ENCODE measurements at regions of chr3 and their contacts with region 1.

Region 1: GRCh38 chr3:146065573-146066006 is 95.4 kb downstream of the PLOD2 start:
- DNase-seq: no peak
- H3K4me3 Mint-ChIP-seq: no peak overlapping the region
- H3K27ac Mint-ChIP-seq: no peak overlapping the region
- H3K4me1 Mint-ChIP-seq: no peaks in the 10 kb centered on the region
- H3K27me3 Mint-ChIP-seq: no peaks in the 10 kb centered on the region

Region 2: DNA sequence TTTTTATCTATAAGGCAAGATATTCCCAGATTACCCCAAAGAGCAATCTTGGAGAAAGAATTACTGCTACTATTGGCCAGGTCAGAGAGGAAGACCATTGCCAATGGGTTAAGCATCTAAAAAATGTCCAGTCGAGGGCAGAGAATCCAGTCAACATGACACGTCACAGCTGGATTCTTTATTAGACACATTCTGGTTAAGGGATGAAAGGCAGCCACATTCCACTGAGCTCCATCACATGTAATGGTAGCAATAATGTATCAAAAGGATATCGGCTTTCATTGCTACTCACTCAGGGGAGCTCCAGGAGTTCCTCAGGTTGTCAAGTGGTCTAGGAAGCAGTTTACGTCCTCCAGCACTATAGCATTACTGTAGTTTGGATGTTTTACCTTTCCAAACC is 325.7 kb before region 1 on chr3:
- intact Hi-C with region 1: no loop called
- DNase-seq: no peak
- H3K4me3 Mint-ChIP-seq: no peak overlapping the region
- H3K27ac Mint-ChIP-seq: no peak overlapping the region
- H3K4me1 Mint-ChIP-seq: no peaks in the 10 kb centered on the region
- H3K27me3 Mint-ChIP-seq: no peaks in the 10 kb centered on the region

Region 3: DNA sequence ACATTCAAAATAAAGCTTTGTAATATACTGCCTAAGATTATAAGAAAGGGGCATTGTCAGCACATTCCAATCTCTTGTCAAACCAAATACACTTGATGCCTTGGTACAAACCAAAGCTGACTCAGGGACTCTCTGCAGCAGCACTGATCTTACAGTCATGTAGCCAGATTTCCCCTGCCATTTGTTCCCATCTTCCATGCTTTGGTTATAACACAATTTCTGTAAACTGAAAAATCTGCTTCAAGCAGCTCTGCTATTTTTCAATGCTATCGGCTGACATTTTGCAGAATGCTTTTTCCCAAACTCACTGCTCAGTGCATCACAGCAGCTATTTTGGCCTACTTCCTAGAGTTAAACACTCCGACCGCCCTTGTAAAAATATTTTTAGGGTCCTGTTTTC is 77.2 kb after region 1 on chr3:
- intact Hi-C with region 1: no loop called
- DNase-seq: no peak
- H3K4me3 Mint-ChIP-seq: no peak overlapping the region
- H3K27ac Mint-ChIP-seq: no peak overlapping the region
- H3K4me1 Mint-ChIP-seq: no peaks in the 10 kb centered on the region
- H3K27me3 Mint-ChIP-seq: no peaks in the 10 kb centered on the region

Region 4: GRCh38 chr3:146189519-146190173 is 124.1 kb after region 1 on chr3:
- intact Hi-C with region 1: loop called (anchors 2 kb)
- DNase-seq: no peak
- H3K4me3 Mint-ChIP-seq: no peak overlapping the region
- H3K27ac Mint-ChIP-seq: no peak overlapping the region
- H3K4me1 Mint-ChIP-seq: no peaks in the 10 kb centered on the region
- H3K27me3 Mint-ChIP-seq: no peaks in the 10 kb centered on the region

Region 5: GRCh38 chr3:146342989-146343388 is 277.4 kb after region 1 on chr3:
- intact Hi-C with region 1: no loop called
- DNase-seq: no peak
- H3K4me3 Mint-ChIP-seq: no peak overlapping the region
- H3K27ac Mint-ChIP-seq: no peak overlapping the region
- H3K4me1 Mint-ChIP-seq: no peaks in the 10 kb centered on the region
- H3K27me3 Mint-ChIP-seq: no peaks in the 10 kb centered on the region